Dorsolateral prefrontal cortex (tissue), 120 donors: ENCODE measurements at regions of chr10 and their contacts with region 1.

Region 1: DNA sequence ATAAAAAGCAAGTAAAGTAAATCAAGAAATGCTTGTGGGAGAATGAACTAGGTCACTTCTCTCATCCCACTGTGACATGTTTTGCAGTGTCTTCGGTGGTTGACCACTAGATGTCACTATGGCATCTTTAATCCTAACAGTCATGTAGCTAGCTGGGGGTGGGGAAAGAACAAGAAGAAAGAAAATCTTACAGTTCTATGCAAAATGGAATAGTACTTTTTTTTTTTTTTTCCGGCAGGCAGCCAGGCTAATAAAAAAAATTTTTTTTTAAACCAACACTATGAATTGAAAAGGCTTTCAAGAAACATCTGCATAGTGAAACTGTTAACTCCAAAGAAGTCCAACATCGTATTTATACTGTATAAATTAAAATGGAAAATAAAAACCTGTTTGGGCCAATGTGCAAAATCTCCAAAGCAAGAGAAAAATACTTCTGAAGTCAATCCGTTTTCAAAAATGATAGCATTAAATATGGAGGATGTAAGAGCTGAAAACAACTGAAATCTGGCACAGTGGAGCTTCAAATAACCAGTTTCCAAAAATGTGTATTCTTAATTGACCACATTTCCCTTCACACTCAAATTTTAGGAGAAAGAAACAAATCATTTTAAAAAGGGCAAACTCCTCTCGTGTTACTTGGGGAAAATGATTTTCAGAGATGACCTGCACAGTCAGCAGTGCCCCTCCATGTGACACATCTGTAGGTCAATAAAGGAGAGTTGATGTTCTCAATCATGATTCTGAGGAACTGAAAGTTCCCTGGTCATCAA is 38.5 kb downstream of the CDK1 start:
- DNase-seq: peak in 4 of 10 donors; percentile 26 to 66 (median 48)
- H3K4me3 ChIP-seq: peak overlapping the region in 51 of 59 donors; percentile 2 to 63 (median 32)
- H3K27ac ChIP-seq: peak overlapping the region in 52 of 59 donors; percentile 0 to 81 (median 56)
- H3K27me3 ChIP-seq: no peaks in the 10 kb centered on the region
- CTCF ChIP-seq: peak; percentile 79 to 97 (median 92)

Region 2: DNA sequence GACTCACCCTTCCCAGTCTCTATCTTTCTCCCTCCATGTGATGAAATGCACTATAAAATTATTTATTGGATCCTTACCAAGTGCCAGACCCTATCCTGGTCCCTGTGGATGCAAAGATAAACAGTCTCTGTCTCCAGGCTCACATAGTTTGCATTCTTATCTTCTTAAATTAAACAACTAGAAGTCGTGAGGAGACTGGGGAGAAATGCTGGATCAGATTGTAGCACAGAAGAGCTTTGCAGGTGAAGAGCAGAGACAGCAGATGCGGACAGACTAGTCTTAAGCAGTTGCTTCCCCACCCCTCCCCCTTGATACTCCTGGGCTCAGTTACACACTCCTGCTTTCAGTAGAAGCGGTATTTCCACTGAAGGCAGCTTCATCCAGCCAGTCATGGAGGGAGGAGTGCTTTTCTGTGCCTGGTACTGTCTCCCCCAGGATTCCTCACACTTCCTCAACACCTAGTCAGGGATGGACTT is 59.4 kb before region 1 on chr10:
- intact Hi-C with region 1: no loop called
- DNase-seq: no peak
- H3K4me3 ChIP-seq: no peak overlapping the region
- H3K27ac ChIP-seq: no peak overlapping the region
- H3K27me3 ChIP-seq: peaks cover 0 to 5% (median 0%) of the 10 kb centered on the region in 45 donors
- CTCF ChIP-seq: no peak

Region 3: DNA sequence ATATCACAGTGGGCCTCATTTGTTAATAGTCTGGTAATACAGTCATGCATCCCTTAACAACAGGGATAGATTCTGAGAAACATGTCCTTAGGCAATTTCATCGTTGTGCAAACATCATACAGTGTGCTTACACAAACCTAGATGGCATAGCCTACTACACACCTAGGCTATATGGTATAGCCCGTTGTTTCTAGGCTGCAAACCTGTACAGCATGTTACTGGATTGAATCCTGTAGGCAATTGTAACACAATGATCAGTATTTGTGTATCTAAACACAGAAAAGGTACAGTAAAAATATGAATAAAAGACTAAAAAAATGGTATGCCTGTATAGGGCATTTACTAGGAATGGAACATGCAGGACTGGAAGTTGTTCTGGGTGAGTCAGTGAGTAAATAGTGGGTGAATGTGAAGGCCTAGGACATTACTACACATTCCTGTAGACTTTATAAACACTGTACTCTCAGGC is 139.2 kb after region 1 on chr10:
- intact Hi-C with region 1: loop called (anchors 5 kb)
- DNase-seq: no peak
- H3K4me3 ChIP-seq: no peak overlapping the region
- H3K27ac ChIP-seq: peak overlapping the region in 2 of 59 donors; percentile 17 to 37
- H3K27me3 ChIP-seq: no peaks in the 10 kb centered on the region
- CTCF ChIP-seq: no peak

Region 4: DNA sequence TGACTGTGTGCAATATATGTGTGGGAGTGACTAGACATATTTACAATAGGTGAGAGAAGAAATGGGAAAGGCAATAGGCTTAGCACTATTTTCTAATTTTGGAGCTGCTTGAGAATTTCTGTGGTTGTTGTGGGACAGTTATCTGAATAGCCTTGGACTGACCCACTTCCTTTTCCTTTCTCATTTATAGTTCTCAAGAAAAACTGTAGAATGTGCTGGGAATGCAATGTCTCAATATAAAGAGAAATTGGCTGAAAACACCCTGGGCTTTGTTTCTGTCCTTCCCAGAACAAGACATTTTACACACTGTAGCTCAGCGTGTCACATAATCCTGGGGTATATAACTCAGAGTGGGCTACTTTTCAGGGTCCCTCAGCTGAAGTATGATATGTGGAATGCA is 280.2 kb after region 1 on chr10:
- intact Hi-C with region 1: loop called in 1 of 2 experiments (anchors 5 kb)
- DNase-seq: no peak
- H3K4me3 ChIP-seq: no peak overlapping the region
- H3K27ac ChIP-seq: peak overlapping the region in 51 of 59 donors; percentile 21 to 96 (median 83)
- H3K27me3 ChIP-seq: no peaks in the 10 kb centered on the region
- CTCF ChIP-seq: no peak

Region 5: GRCh38 chr10:61284222-61284890 is 467.5 kb after region 1 on chr10:
- intact Hi-C with region 1: loop called (anchors 2 to 5 kb)
- DNase-seq: no peak
- H3K4me3 ChIP-seq: no peak overlapping the region
- H3K27ac ChIP-seq: peak overlapping the region in 15 of 59 donors; percentile 2 to 67 (median 22)
- H3K27me3 ChIP-seq: no peaks in the 10 kb centered on the region
- CTCF ChIP-seq: peak; percentile 67 to 96 (median 85)

Region 6: DNA sequence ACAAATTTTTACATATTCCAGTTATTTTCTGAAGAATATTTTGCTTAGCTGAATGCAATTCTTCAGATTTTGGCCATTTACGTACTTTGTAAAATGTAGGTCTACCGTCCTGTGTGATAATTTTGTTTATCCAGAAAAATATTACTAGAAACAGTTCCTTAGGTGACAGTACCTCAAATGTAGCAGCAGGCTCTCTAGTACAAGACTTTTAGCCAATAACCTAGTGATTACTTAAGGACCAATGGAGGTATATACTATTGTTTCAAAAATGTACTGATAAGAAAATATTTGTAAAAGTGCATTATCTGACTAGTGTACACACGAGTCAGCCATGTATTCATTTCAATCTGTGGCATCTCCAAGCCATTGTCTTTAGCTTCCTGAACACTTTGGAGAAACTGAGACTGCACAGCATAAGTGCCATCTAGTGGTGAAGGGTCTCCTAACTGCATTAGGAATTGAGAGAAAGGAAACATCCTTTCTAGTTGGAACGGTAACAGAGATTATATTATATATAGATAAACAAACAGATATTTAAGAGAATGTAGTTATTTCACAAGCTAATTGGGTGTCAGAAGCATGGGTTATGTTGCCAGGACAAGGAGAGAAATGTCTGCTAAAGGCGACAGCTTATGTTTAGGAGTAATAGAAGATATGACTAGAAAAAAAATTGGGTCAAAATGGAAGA is 1428.1 kb after region 1 on chr10:
- intact Hi-C with region 1: loop called in 1 of 2 experiments (anchors 10 kb)
- DNase-seq: peak in 4 of 10 donors; percentile 11 to 57 (median 22)
- H3K4me3 ChIP-seq: peak overlapping the region in 12 of 59 donors; percentile 3 to 29 (median 8)
- H3K27ac ChIP-seq: peak overlapping the region in 4 of 59 donors; percentile 6 to 39 (median 28)
- H3K27me3 ChIP-seq: no peaks in the 10 kb centered on the region
- CTCF ChIP-seq: peak; percentile 74 to 99 (median 93)